Caco-2 (cell line): ENCODE measurements at regions of chr2 and their contacts with region 1.

Region 1: GRCh38 chr2:49255409-49255971 is 101.2 kb upstream of the FSHR start:
- DNase-seq: no peak
- H3K4me3 ChIP-seq: no peak overlapping the region
- H3K4me3 Mint-ChIP-seq: no peak overlapping the region
- H3K27ac Mint-ChIP-seq: no peak overlapping the region
- H3K4me1 ChIP-seq: peaks cover 12% of the 10 kb centered on the region
- H3K4me1 Mint-ChIP-seq: peaks cover 10% of the 10 kb centered on the region
- H3K27me3 ChIP-seq: no peaks in the 10 kb centered on the region
- H3K27me3 Mint-ChIP-seq: no peaks in the 10 kb centered on the region
- CTCF ChIP-seq: no peak

Region 2: GRCh38 chr2:49210191-49210590 is 45.3 kb before region 1 on chr2:
- CTCF ChIA-PET with region 1: no interaction called
- POLR2A ChIA-PET with region 1: no interaction called
- intact Hi-C with region 1: no loop called
- DNase-seq: peak; percentile 43 to 68
- H3K4me3 ChIP-seq: no peak overlapping the region
- H3K4me3 Mint-ChIP-seq: no peak overlapping the region
- H3K27ac Mint-ChIP-seq: no peak overlapping the region
- H3K4me1 ChIP-seq: 0 out of 2 replicates have a peak, but pooled peaks cover 3% of the 10 kb centered on the region
- H3K4me1 Mint-ChIP-seq: no peaks in the 10 kb centered on the region
- H3K27me3 ChIP-seq: no peaks in the 10 kb centered on the region
- H3K27me3 Mint-ChIP-seq: peaks cover 2% of the 10 kb centered on the region
- CTCF ChIP-seq: no peak

Region 3: DNA sequence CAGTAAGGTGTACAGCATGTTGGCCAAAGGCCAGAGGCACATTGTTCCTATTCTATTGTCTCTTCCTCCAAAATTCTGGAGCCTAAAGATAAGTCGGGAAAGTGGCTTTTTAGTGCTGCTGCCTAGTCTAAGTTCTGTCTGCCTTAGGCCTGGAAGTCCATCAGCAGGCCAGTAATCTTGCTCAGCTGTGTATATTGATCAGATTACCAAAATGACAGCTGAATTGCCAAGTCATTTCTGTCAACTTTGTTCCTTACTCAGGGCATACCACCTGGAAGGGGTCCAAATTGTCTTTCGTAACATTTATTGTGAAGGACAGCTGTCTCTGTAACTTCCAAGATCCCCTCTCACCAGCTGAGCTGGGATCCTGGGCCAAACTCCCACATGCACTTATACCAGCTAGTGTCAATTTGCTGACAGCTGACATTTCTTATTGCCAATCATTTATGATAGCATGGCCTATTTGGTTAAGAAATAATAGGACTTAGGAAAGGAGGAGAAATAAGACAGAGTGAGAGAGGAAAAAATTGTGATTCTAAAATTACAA is 15.6 kb after region 1 on chr2:
- CTCF ChIA-PET with region 1: no interaction called
- POLR2A ChIA-PET with region 1: no interaction called
- intact Hi-C with region 1: no loop called
- DNase-seq: no peak
- H3K4me3 ChIP-seq: no peak overlapping the region
- H3K4me3 Mint-ChIP-seq: no peak overlapping the region
- H3K27ac Mint-ChIP-seq: no peak overlapping the region
- H3K4me1 ChIP-seq: no peaks in the 10 kb centered on the region
- H3K4me1 Mint-ChIP-seq: no peaks in the 10 kb centered on the region
- H3K27me3 ChIP-seq: no peaks in the 10 kb centered on the region
- H3K27me3 Mint-ChIP-seq: no peaks in the 10 kb centered on the region
- CTCF ChIP-seq: no peak

Region 4: DNA sequence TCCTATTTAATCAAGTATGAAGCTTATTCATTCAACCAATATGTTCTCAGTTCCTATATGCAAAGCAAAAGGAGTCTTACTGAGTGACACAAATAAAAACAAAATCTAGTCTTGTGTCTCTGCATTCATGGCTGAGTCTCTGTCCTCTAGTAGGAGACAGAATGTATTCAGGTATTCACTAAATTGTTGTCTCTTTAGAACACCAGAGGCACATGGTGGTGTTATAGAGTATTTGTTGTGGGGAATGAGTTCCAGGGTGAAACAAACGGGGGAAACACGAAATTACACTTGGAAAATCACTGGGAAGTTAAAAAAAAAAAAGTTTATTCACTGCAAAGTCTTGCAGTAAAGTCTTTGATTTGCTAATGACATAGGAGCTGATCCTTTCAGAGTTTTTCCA is 30.6 kb after region 1 on chr2:
- CTCF ChIA-PET with region 1: no interaction called
- POLR2A ChIA-PET with region 1: no interaction called
- intact Hi-C with region 1: loop called (anchors 2 kb)
- DNase-seq: peak in 1 of 2 experiments; percentile 16
- H3K4me3 ChIP-seq: no peak overlapping the region
- H3K4me3 Mint-ChIP-seq: no peak overlapping the region
- H3K27ac Mint-ChIP-seq: no peak overlapping the region
- H3K4me1 ChIP-seq: no peaks in the 10 kb centered on the region
- H3K4me1 Mint-ChIP-seq: no peaks in the 10 kb centered on the region
- H3K27me3 ChIP-seq: no peaks in the 10 kb centered on the region
- H3K27me3 Mint-ChIP-seq: peaks cover 9% of the 10 kb centered on the region
- CTCF ChIP-seq: peak; percentile 29 to 41

Region 5: DNA sequence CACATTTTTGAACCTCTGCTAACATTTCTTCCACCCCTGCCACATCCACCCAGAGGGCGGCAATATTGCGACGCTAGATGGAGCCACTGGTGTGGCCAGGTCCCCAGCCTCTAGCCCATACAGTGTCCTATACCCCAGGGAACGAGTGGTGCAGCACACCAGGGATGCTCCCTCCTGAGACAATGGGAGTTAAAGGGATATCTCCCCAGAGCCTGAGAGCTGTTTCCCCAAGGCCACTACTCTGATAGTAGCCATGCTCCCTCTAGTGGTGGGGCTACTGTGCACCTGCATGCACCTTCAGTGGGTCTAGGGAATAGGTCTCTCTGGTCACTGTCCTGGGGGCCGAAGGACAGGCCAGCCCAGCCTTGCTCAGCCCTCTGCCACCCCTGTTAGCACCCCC is 235.2 kb after region 1 on chr2:
- CTCF ChIA-PET with region 1: no interaction called
- POLR2A ChIA-PET with region 1: no interaction called
- intact Hi-C with region 1: loop called (anchors 1 kb)
- DNase-seq: peak; percentile 61 to 64
- H3K4me3 ChIP-seq: no peak overlapping the region
- H3K4me3 Mint-ChIP-seq: no peak overlapping the region
- H3K27ac Mint-ChIP-seq: no peak overlapping the region
- H3K4me1 ChIP-seq: no peaks in the 10 kb centered on the region
- H3K4me1 Mint-ChIP-seq: no peaks in the 10 kb centered on the region
- H3K27me3 ChIP-seq: no peaks in the 10 kb centered on the region
- H3K27me3 Mint-ChIP-seq: no peaks in the 10 kb centered on the region
- CTCF ChIP-seq: peak; percentile 62 to 69